ENCODE measurements at regions of chr1 and their contacts with region 1.

Region 1: GRCh38 chr1:164440232-164440631 is 118.8 kb upstream of the PBX1 start:
- DNase-seq: peak in 1 of 2 donors; percentile 71
- H3K4me3 ChIP-seq: no peak overlapping the region
- H3K27ac ChIP-seq: peak overlapping the region; percentile 32 to 35
- H3K4me1 ChIP-seq: peaks cover 0 to 37% (median 5%) of the 10 kb centered on the region in 4 donors
- H3K27me3 ChIP-seq: no peaks in the 10 kb centered on the region
- CTCF ChIP-seq: peak; percentile 54 to 63

Region 2: DNA sequence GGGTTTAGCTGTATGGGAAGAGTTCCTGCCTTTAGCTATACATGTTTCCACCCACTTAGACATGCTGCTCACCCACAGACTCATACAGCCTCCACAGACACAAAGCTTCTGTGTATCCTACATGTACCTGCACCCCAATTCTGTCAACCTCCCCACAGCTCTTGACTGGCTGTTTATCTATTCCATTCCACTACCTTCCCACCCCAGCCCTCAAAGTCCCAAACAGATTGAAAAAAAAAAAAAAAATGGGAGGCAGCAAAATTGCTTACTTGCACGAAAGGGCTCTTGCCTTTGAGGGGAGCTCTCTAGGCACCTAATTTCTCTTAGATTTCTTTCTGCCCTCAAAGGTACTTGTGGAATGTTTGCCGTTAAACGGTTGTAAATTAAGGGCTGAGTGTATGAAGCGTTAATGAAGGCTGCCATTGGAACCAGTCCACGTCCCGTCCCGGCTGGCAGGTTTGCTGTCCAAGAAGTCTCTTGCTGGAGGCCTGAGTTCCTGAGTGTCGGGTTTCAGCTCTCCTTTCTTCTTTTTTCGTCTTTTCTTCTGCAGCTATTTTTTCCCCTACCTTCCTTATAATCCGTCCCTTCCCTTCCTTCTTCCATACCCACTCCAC is 162.4 kb after region 1 on chr1:
- intact Hi-C with region 1: loop called (anchors 10 kb)
- DNase-seq: peak; percentile 45 to 72
- H3K4me3 ChIP-seq: peak overlapping the region; percentile 11 to 24
- H3K27ac ChIP-seq: peak overlapping the region; percentile 66 to 73
- H3K4me1 ChIP-seq: peaks cover 0 to 57% (median 36%) of the 10 kb centered on the region in 4 donors
- H3K27me3 ChIP-seq: no peaks in the 10 kb centered on the region
- CTCF ChIP-seq: no peak

Region 3: DNA sequence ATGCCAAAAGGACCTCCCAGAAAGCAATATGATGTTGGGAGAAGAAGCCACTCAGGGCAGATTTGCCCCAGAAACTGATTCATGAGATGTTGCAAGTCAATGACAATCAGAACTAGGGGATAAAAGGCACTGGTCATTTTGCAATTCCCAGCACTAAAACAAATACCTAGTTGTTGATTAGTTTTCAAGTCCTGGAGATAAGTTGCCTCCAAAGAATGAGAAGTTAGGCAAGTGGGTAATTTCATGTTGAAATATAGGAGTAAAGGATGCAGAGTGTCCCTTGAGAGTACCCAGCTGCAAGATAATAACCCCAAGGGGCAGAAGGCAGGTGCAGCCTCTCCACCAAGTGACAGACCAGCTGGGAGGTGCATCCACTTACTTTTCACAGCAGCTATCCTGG is 482.4 kb after region 1 on chr1:
- intact Hi-C with region 1: no loop called
- DNase-seq: no peak
- H3K4me3 ChIP-seq: no peak overlapping the region
- H3K27ac ChIP-seq: no peak overlapping the region
- H3K4me1 ChIP-seq: no peaks in the 10 kb centered on the region
- H3K27me3 ChIP-seq: no peaks in the 10 kb centered on the region
- CTCF ChIP-seq: no peak